Activated CD8-positive, alpha-beta T cell treated with anti-CD3 and anti-CD28 coated beads for 36 hours (primary cell): ENCODE measurements at regions of chr12 and their contacts with region 1.

Region 1: DNA sequence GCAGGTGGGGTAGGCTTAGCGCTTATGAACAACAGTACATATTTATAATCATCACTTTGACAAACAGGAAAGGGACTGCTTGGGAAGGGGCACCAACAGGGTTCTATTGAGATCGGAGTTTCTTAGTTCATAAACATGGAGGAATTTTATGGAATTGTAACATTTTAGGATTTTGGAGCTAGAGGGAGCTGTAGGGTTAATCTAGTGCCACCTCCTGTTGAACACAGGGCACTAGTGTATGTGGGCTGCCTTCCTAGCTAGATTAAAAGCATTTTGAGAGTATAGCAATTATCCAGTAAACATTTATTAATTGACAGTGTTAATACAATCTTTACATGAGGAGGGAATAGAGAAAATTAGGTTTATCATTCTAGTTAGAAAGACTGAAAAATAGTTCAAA is 23.1 kb upstream of the TBC1D30 start:
- DNase-seq: no peak
- ATAC-seq: no peak
- H3K4me3 Mint-ChIP-seq: no peak overlapping the region
- H3K27ac Mint-ChIP-seq: no peak overlapping the region
- H3K4me1 Mint-ChIP-seq: no peaks in the 10 kb centered on the region
- H3K27me3 Mint-ChIP-seq: peaks cover 30% of the 10 kb centered on the region
- CTCF ChIP-seq: no peak

Region 2: GRCh38 chr12:64780531-64781279 is 20.7 kb before region 1 on chr12:
- CTCF ChIA-PET with region 1: interaction called, 36 read pairs
- POLR2A ChIA-PET with region 1: no interaction called
- intact Hi-C with region 1: no loop called
- DNase-seq: peak; percentile 16
- ATAC-seq: peak; percentile 62
- H3K4me3 Mint-ChIP-seq: peak overlapping the region; percentile 63
- H3K27ac Mint-ChIP-seq: no peak overlapping the region
- H3K4me1 Mint-ChIP-seq: peaks cover 9% of the 10 kb centered on the region
- H3K27me3 Mint-ChIP-seq: peaks cover 62% of the 10 kb centered on the region
- CTCF ChIP-seq: no peak

Region 3: DNA sequence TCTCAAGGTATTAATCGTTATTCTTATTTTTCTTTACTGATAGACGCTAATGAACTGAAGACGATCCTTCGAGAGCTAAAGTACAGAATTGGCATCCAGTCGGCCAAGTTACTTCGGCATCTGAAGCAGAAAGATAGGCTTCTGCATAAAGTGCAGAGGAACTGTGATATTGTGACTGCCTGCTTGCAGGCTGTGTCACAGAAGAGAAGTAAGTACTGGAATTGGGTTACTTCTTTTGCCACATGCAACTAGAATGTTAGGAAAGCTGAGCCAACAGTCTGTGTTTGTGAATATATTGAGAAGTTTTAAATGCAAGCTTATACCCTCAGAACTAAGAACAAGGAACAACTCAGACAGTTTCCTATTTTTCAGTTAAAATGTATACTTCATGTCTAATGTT is 15.5 kb before region 1 on chr12:
- CTCF ChIA-PET with region 1: interaction called, 36 read pairs
- POLR2A ChIA-PET with region 1: no interaction called
- intact Hi-C with region 1: no loop called
- DNase-seq: no peak
- ATAC-seq: no peak
- H3K4me3 Mint-ChIP-seq: no peak overlapping the region
- H3K27ac Mint-ChIP-seq: no peak overlapping the region
- H3K4me1 Mint-ChIP-seq: peaks cover 9% of the 10 kb centered on the region
- H3K27me3 Mint-ChIP-seq: peaks cover 27% of the 10 kb centered on the region
- CTCF ChIP-seq: no peak

Region 4: DNA sequence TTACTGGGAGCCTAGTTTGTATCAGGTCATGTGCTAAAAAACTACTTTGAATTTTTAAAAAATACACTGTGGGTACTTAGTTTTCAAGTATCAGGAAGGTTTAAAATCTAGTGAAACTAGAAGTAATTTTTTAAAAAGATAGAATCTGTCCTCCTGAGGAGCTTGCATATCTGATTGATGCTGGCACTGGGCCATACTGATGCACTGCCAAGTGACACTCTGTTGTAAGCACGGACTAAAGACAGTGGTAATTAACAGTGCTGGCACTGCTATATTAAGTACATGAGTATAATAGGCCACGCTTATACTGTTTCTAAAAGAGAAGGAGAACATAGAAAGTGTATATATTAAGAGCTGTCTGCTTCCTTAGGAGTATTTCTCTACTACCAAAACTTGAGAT is 13.1 kb after region 1 on chr12:
- CTCF ChIA-PET with region 1: interaction called, 20 read pairs
- POLR2A ChIA-PET with region 1: no interaction called
- intact Hi-C with region 1: no loop called
- DNase-seq: no peak
- ATAC-seq: no peak
- H3K4me3 Mint-ChIP-seq: no peak overlapping the region
- H3K27ac Mint-ChIP-seq: no peak overlapping the region
- H3K4me1 Mint-ChIP-seq: no peaks in the 10 kb centered on the region
- H3K27me3 Mint-ChIP-seq: peaks cover 22% of the 10 kb centered on the region
- CTCF ChIP-seq: no peak

Region 5: GRCh38 chr12:65121049-65121955 is 319.9 kb after region 1 on chr12 and contains the start of gene WIF1:
- CTCF ChIA-PET with region 1: interaction called, 5 read pairs
- POLR2A ChIA-PET with region 1: no interaction called
- intact Hi-C with region 1: loop called (anchors 5 kb)
- DNase-seq: peak; percentile 40
- ATAC-seq: peak; percentile 86
- H3K4me3 Mint-ChIP-seq: peak within 1 kb of the TSS; percentile 44
- H3K27ac Mint-ChIP-seq: no peak within 1 kb of the TSS
- H3K4me1 Mint-ChIP-seq: peaks cover 3% of the 10 kb centered on the region
- H3K27me3 Mint-ChIP-seq: peaks cover 40% of the 10 kb centered on the region
- CTCF ChIP-seq: peak; percentile 53
- total RNA-seq, gene WIF1: not detected

Region 6: DNA sequence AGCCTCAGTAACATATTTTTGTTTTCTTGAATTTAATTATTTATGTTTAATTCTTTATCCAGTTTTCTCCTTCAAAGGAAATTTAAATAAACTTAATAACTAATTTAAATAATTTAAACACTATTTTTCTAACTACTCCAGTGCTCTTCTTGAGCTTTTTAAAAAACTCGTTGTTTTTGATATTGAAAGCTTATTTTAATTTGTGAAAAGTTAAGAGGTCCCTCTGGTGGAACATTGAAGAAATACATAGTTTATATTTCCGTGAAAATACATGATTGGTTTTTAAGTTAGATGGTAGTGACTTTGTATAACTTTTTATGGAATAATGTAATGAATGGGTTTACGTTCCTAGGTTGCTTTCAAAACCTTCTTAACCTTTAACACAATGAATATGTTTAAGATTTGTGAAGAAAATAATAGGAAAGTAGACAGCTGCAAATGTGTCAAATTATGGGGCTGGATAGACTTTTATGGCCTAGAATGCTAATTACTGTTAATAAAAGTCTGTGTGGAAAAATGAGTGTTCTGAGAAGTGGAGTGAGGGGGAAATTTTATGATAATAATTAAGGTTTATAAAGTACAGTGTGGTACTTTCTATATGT is 431.2 kb after region 1 on chr12:
- CTCF ChIA-PET with region 1: interaction called, 5 read pairs
- POLR2A ChIA-PET with region 1: no interaction called
- intact Hi-C with region 1: loop called (anchors 5 kb)
- DNase-seq: no peak
- ATAC-seq: no peak
- H3K4me3 Mint-ChIP-seq: no peak overlapping the region
- H3K27ac Mint-ChIP-seq: no peak overlapping the region
- H3K4me1 Mint-ChIP-seq: peaks cover 10% of the 10 kb centered on the region
- H3K27me3 Mint-ChIP-seq: no peaks in the 10 kb centered on the region
- CTCF ChIP-seq: peak; percentile 63